Activated CD4-positive, alpha-beta T cell treated with anti-CD3 and anti-CD28 coated beads for 36 hours (primary cell): ENCODE measurements at regions of chr17 and their contacts with region 1.

Region 1: GRCh38 chr17:2336215-2336851 is at the start of gene TSR1:
- DNase-seq: peak; percentile 94
- ATAC-seq: peak; percentile 93
- H3K4me3 Mint-ChIP-seq: no peak within 1 kb of the TSS
- H3K27ac Mint-ChIP-seq: peak within 1 kb of the TSS; percentile 99
- H3K4me1 Mint-ChIP-seq: peaks cover 14% of the 10 kb centered on the region
- H3K27me3 Mint-ChIP-seq: no peaks in the 10 kb centered on the region
- total RNA-seq, gene TSR1: 59.3 to 77.0 TPM

Region 2: GRCh38 chr17:1703063-1703462 is 633.3 kb before region 1 on chr17:
- CTCF ChIA-PET with region 1: no interaction called
- POLR2A ChIA-PET with region 1: no interaction called
- intact Hi-C with region 1: no loop called
- DNase-seq: no peak
- ATAC-seq: no peak
- H3K4me3 Mint-ChIP-seq: no peak overlapping the region
- H3K27ac Mint-ChIP-seq: no peak overlapping the region
- H3K4me1 Mint-ChIP-seq: no peaks in the 10 kb centered on the region
- H3K27me3 Mint-ChIP-seq: peaks cover 21% of the 10 kb centered on the region

Region 3: GRCh38 chr17:2347547-2348307 is 11.4 kb after region 1 on chr17:
- CTCF ChIA-PET with region 1: interaction called, 9 read pairs
- POLR2A ChIA-PET with region 1: no interaction called
- intact Hi-C with region 1: loop called in 1 of 2 experiments (anchors 2 kb)
- DNase-seq: no peak
- ATAC-seq: no peak
- H3K4me3 Mint-ChIP-seq: no peak overlapping the region
- H3K27ac Mint-ChIP-seq: no peak overlapping the region
- H3K4me1 Mint-ChIP-seq: peaks cover 6% of the 10 kb centered on the region
- H3K27me3 Mint-ChIP-seq: no peaks in the 10 kb centered on the region

Region 4: GRCh38 chr17:2592971-2593820 is 256.9 kb after region 1 on chr17 and contains the start of gene PAFAH1B1:
- CTCF ChIA-PET with region 1: no interaction called
- POLR2A ChIA-PET with region 1: no interaction called
- intact Hi-C with region 1: loop called in 1 of 2 experiments (anchors 1 kb)
- DNase-seq: peak; percentile 98
- ATAC-seq: peak; percentile 84
- H3K4me3 Mint-ChIP-seq: peak within 1 kb of the TSS; percentile 79
- H3K27ac Mint-ChIP-seq: peak within 1 kb of the TSS; percentile 88
- H3K4me1 Mint-ChIP-seq: peaks cover 25% of the 10 kb centered on the region
- H3K27me3 Mint-ChIP-seq: no peaks in the 10 kb centered on the region
- total RNA-seq, gene PAFAH1B1: 163 to 167 TPM